ENCODE measurements at regions of chr17 and their contacts with region 1.

Region 1: DNA sequence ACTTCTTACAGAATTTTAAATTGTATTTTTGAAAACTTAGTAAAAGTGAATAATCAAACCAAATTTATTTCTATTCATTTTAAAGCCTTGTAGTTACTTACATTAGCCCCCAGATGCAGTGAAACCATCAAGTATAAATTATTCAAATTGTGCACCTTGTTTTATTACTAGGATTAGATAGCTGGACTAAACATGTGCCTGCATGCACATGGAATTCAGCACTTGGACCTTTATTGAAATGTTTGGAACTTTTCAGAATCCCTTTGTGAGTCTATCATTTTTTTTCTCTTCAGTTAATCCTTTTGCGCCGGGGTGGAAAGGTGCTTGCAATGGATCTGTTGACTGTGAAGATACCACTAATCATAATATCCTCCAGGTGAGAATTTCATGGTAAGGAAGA is 4.7 kb downstream of the ZPBP2 start:
- DNase-seq: peak; percentile 78
- H3K4me3 Mint-ChIP-seq: no peak overlapping the region
- H3K27ac Mint-ChIP-seq: no peak overlapping the region
- H3K4me1 Mint-ChIP-seq: no peaks in the 10 kb centered on the region
- H3K27me3 Mint-ChIP-seq: peaks cover 11% of the 10 kb centered on the region
- CTCF ChIP-seq: no peak

Region 2: DNA sequence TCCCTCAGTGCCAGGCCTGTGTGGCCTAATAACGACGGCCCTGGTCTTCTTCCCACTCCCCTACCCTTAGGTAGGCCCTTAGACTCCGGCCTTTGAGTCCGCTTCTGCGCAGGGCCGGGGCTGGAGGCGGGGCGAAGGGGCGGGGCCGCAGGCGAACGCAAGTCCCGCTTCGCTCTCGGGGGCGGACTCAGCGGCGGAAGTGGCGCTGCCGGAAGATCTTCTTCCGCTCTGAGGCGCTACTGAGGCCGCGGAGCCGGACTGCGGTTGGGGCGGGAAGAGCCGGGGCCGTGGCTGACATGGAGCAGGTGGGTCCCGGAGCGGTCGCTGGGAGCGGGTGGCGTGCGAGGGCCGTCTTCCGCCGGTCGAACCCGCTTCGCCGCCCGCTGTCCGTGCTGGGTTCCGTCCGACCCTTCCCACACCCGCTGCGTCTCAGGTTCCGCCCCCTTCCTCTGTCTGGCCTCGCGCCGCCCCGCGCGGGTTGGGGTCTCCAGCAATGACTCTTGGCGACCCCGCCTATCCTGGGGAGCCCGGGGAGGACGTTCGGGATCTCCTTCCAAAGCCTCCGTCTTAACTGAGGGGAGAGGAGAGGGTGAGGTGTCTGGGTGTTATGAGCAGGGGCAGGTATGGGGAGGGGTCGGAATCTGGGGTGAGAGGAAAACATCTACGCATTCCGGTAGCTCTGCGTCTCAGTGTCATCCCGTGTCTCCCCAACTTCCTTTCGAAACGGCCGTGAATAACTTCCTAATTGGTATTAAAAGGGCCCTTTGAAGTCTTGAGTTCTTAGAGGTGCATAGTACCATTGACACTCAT is 235.6 kb before region 1 on chr17 and contains the start of gene STARD3:
- CTCF ChIA-PET with region 1: interaction called, 10 read pairs
- intact Hi-C with region 1: no loop called
- DNase-seq: no peak
- H3K4me3 Mint-ChIP-seq: peak within 1 kb of the TSS; percentile 71
- H3K27ac Mint-ChIP-seq: peak within 1 kb of the TSS; percentile 28
- H3K4me1 Mint-ChIP-seq: peaks cover 61% of the 10 kb centered on the region
- H3K27me3 Mint-ChIP-seq: peaks cover 5% of the 10 kb centered on the region
- CTCF ChIP-seq: no peak
- total RNA-seq, gene STARD3: 2,579 and 2,697 TPM in 2 replicates

Region 3: DNA sequence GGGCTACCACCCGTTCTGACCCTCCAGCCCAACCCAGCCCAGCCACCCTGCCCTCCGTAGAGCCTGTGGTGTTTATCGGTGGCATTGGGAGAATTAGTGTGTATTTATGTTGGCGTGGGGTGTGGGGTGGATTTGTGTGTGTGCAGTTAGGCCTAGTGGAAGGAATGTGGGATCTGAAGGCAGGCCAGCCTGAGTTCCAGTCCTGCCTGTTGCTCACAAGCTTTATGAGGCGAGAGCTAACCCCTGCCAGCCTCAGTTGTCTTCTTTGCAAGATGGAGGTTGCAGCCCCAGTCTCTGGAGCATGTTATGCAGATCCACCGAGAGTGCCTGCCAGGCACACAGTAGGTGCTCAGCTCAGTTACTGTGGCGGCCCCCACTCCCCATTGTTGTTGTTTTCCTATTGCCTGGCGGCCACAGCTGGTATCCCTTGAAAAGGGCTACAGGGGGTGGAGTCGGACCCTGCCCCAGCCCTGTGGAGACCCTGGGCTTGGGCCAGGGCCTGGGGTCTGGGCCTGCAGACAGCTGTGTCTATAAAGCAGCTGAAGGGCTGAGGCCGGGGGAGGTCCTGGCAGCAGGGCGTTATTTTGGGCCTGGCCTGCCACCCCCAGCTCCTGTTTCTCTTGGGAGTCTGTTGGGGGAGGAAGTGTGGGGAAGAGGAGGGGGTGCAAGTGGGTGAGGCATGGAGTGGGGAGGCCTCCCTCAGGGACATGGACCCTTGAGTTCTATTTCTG is 167.8 kb before region 1 on chr17:
- CTCF ChIA-PET with region 1: interaction called, 76 read pairs
- intact Hi-C with region 1: no loop called
- DNase-seq: peak; percentile 99
- H3K4me3 Mint-ChIP-seq: peak overlapping the region; percentile 71
- H3K27ac Mint-ChIP-seq: peak overlapping the region; percentile 67
- H3K4me1 Mint-ChIP-seq: peaks cover 92% of the 10 kb centered on the region
- H3K27me3 Mint-ChIP-seq: no peaks in the 10 kb centered on the region
- CTCF ChIP-seq: no peak

Region 4: GRCh38 chr17:39763046-39763820 is 109.5 kb before region 1 on chr17:
- CTCF ChIA-PET with region 1: interaction called, 18 read pairs
- intact Hi-C with region 1: no loop called
- DNase-seq: no peak
- H3K4me3 Mint-ChIP-seq: no peak overlapping the region
- H3K27ac Mint-ChIP-seq: no peak overlapping the region
- H3K4me1 Mint-ChIP-seq: peaks cover 12% of the 10 kb centered on the region
- H3K27me3 Mint-ChIP-seq: peaks cover 26% of the 10 kb centered on the region
- CTCF ChIP-seq: no peak

Region 5: DNA sequence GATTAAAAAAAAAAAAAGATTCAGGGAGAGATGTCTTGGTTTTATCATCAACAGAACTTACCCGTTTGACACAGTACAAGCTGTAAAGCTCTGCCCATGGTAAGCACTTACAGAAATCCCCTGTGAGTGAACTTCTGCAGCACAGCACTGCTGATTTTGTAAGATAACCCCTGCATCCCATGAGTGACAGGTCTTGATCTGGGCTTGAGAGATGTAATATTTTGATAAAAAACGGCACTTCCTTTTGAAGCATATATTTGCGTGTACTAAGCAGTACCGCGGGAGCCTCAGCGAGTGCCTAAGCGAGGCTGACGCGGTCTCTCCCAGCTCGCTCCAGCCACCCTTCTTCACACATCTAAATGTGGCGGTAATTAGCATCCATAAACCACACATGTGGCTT is 59.1 kb before region 1 on chr17:
- CTCF ChIA-PET with region 1: interaction called, 79 read pairs
- intact Hi-C with region 1: no loop called
- DNase-seq: peak; percentile 64
- H3K4me3 Mint-ChIP-seq: no peak overlapping the region
- H3K27ac Mint-ChIP-seq: no peak overlapping the region
- H3K4me1 Mint-ChIP-seq: peaks cover 19% of the 10 kb centered on the region
- H3K27me3 Mint-ChIP-seq: no peaks in the 10 kb centered on the region
- CTCF ChIP-seq: no peak

Region 6: DNA sequence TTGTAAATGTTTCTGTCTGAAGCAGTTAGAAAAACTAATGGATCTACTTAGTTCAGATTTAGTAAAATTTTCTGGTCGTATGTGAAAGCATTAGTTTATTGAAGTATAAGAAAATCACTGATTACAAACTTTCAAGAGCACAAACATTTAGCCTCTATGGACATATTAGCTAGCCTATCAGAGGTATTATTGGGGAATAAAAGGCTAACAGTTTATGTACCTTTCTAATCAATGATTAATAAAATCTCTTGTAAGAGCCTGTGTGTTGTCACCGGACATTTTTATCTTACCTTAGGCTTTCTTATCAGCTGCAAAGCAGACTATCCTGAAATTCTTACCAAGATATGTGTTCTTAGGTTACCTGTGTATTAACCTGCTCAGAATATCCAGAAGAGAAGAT is 16.4 kb after region 1 on chr17:
- CTCF ChIA-PET with region 1: interaction called, 1,000 read pairs
- intact Hi-C with region 1: no loop called
- DNase-seq: peak; percentile 82
- H3K4me3 Mint-ChIP-seq: no peak overlapping the region
- H3K27ac Mint-ChIP-seq: no peak overlapping the region
- H3K4me1 Mint-ChIP-seq: peaks cover 26% of the 10 kb centered on the region
- H3K27me3 Mint-ChIP-seq: peaks cover 22% of the 10 kb centered on the region
- CTCF ChIP-seq: no peak

Region 7: GRCh38 chr17:39952680-39953470 is 80.1 kb after region 1 on chr17:
- CTCF ChIA-PET with region 1: interaction called, 184 read pairs
- intact Hi-C with region 1: no loop called
- DNase-seq: peak; percentile 100
- H3K4me3 Mint-ChIP-seq: peak overlapping the region; percentile 58
- H3K27ac Mint-ChIP-seq: peak overlapping the region; percentile 18
- H3K4me1 Mint-ChIP-seq: peaks cover 42% of the 10 kb centered on the region
- H3K27me3 Mint-ChIP-seq: peaks cover 15% of the 10 kb centered on the region
- CTCF ChIP-seq: no peak